Activated CD4-positive, alpha-beta T cell treated with anti-CD3 and anti-CD28 coated beads for 36 hours (primary cell): ENCODE measurements at regions of chr19 and their contacts with region 1.

Region 1: DNA sequence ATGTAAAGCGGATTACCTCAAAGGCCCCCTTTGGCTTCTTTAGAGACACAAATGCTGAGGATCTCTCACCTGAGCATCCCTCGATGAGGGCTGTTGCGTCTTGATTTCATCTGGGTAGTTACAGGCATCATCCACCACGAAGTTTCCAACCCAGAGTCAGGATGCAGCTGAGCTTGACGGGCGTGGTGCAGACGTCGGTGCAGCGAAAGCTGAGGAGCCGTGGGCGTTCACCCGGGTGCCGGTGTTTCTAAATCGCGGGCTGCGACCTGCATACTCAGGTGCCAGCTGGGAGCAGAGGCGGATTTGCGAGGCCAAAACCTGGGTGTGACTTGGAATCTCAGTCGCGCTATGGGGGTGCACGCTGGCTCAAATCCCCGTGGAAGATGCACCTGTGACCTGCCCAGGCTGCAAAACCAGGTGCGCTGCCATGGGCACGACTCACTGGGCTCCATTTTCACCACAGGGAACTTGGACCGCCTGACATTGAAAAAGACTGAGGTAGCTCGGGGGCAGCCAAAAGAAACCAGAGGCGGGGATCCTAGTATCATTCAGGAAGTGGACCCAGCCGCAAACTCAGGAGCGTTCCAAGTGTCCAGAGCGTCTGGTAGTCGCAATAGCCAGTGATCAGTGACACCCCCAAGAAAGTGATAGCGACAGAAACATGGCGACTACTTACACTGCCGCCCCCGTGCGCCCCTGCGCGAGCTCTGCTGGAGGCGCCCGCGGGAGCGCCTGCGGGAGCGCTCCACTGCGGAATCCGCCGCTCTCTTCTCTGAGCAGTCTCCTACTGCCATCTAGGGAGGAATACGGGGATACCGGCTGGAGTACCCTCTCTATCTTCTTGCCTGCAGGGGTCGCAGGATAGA is 36.4 kb upstream of the IGFL4 start:
- DNase-seq: peak; percentile 67
- ATAC-seq: peak; percentile 63
- H3K4me3 Mint-ChIP-seq: no peak overlapping the region
- H3K27ac Mint-ChIP-seq: no peak overlapping the region
- H3K4me1 Mint-ChIP-seq: peaks cover 8% of the 10 kb centered on the region
- H3K27me3 Mint-ChIP-seq: peaks cover 73% of the 10 kb centered on the region

Region 2: GRCh38 chr19:46021531-46022041 is 55.6 kb before region 1 on chr19:
- CTCF ChIA-PET with region 1: interaction called, 14 read pairs
- POLR2A ChIA-PET with region 1: no interaction called
- intact Hi-C with region 1: loop called in 1 of 2 experiments (anchors 5 kb)
- DNase-seq: no peak
- ATAC-seq: no peak
- H3K4me3 Mint-ChIP-seq: no peak overlapping the region
- H3K27ac Mint-ChIP-seq: no peak overlapping the region
- H3K4me1 Mint-ChIP-seq: peaks cover 14% of the 10 kb centered on the region
- H3K27me3 Mint-ChIP-seq: peaks cover 13% of the 10 kb centered on the region

Region 3: DNA sequence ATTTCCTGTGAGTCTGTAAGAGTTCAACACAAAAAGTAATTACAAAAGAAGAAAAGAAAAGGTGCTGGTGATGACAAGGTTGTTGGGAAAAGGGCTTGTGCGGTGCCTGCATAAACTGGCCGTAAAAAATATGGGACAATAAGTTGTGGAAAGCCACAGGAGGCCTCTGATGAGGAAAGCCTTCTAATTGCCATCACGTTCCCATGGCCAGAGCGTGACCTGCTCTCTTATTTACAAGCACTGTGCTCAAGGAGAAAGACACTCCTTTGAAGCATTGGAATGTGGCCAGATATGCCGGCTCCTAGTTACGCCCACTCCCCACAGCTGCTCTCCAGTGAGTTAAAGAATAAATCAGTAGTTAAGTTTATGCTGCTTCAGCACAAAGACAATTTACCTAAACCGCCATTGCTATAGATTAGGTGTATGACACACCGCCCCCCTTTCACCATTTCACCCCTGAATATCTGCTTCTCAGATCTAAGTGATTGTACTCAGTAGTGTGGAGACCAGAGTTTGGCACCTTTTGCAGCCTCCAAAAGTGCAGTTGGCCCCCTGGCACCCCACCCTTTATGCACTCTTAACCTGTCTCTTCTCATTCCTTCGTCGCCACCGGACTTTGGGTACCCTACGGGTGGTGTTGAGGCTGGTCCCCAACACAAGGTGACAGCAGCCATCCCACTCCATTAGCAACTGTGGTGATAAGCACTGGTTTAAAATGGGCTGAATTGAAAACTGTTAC is 46.2 kb before region 1 on chr19:
- CTCF ChIA-PET with region 1: interaction called, 14 read pairs
- POLR2A ChIA-PET with region 1: no interaction called
- intact Hi-C with region 1: loop called (anchors 1 to 5 kb)
- DNase-seq: no peak
- ATAC-seq: no peak
- H3K4me3 Mint-ChIP-seq: no peak overlapping the region
- H3K27ac Mint-ChIP-seq: no peak overlapping the region
- H3K4me1 Mint-ChIP-seq: peaks cover 12% of the 10 kb centered on the region
- H3K27me3 Mint-ChIP-seq: peaks cover 8% of the 10 kb centered on the region

Region 4: GRCh38 chr19:46181388-46181779 is 104.2 kb after region 1 on chr19:
- CTCF ChIA-PET with region 1: no interaction called
- POLR2A ChIA-PET with region 1: no interaction called
- intact Hi-C with region 1: loop called in 1 of 2 experiments (anchors 1 kb)
- DNase-seq: peak; percentile 60
- ATAC-seq: peak; percentile 91
- H3K4me3 Mint-ChIP-seq: no peak overlapping the region
- H3K27ac Mint-ChIP-seq: no peak overlapping the region
- H3K4me1 Mint-ChIP-seq: peaks cover 27% of the 10 kb centered on the region
- H3K27me3 Mint-ChIP-seq: peaks cover 37% of the 10 kb centered on the region

Region 5: GRCh38 chr19:46192992-46193650 is 115.9 kb after region 1 on chr19:
- CTCF ChIA-PET with region 1: interaction called, 16 read pairs
- POLR2A ChIA-PET with region 1: no interaction called
- intact Hi-C with region 1: loop called (anchors 1 kb)
- DNase-seq: peak; percentile 31
- ATAC-seq: peak; percentile 65
- H3K4me3 Mint-ChIP-seq: no peak overlapping the region
- H3K27ac Mint-ChIP-seq: no peak overlapping the region
- H3K4me1 Mint-ChIP-seq: no peaks in the 10 kb centered on the region
- H3K27me3 Mint-ChIP-seq: peaks cover 48% of the 10 kb centered on the region

Region 6: GRCh38 chr19:46265217-46265828 is 188.1 kb after region 1 on chr19:
- CTCF ChIA-PET with region 1: interaction called, 13 read pairs
- POLR2A ChIA-PET with region 1: no interaction called
- intact Hi-C with region 1: loop called (anchors 1 kb)
- DNase-seq: peak; percentile 82
- ATAC-seq: peak; percentile 75
- H3K4me3 Mint-ChIP-seq: no peak overlapping the region
- H3K27ac Mint-ChIP-seq: no peak overlapping the region
- H3K4me1 Mint-ChIP-seq: peaks cover 11% of the 10 kb centered on the region
- H3K27me3 Mint-ChIP-seq: peaks cover 46% of the 10 kb centered on the region

Region 7: GRCh38 chr19:46487802-46488445 is 410.7 kb after region 1 on chr19:
- CTCF ChIA-PET with region 1: no interaction called
- POLR2A ChIA-PET with region 1: no interaction called
- intact Hi-C with region 1: loop called in 1 of 2 experiments (anchors 5 kb)
- DNase-seq: peak; percentile 86
- ATAC-seq: peak; percentile 68
- H3K4me3 Mint-ChIP-seq: no peak overlapping the region
- H3K27ac Mint-ChIP-seq: no peak overlapping the region
- H3K4me1 Mint-ChIP-seq: peaks cover 11% of the 10 kb centered on the region
- H3K27me3 Mint-ChIP-seq: peaks cover 61% of the 10 kb centered on the region